Activated CD4-positive, alpha-beta memory T cell treated with anti-CD3 and anti-CD28 coated beads, Interleukin-2, amount 10 ng/mL, durations not matched to agents 7 days and 5 days (primary cell): ENCODE measurements at regions of chr11 and their contacts with region 1.

Region 1: GRCh38 chr11:44621140-44621681 is 55.7 kb downstream of the CD82 start:
- DNase-seq: peak; percentile 70
- H3K4me3 Mint-ChIP-seq: no peak overlapping the region
- H3K27ac Mint-ChIP-seq: no peak overlapping the region
- H3K4me1 Mint-ChIP-seq: peaks cover 18% of the 10 kb centered on the region
- H3K27me3 Mint-ChIP-seq: no peaks in the 10 kb centered on the region

Region 2: DNA sequence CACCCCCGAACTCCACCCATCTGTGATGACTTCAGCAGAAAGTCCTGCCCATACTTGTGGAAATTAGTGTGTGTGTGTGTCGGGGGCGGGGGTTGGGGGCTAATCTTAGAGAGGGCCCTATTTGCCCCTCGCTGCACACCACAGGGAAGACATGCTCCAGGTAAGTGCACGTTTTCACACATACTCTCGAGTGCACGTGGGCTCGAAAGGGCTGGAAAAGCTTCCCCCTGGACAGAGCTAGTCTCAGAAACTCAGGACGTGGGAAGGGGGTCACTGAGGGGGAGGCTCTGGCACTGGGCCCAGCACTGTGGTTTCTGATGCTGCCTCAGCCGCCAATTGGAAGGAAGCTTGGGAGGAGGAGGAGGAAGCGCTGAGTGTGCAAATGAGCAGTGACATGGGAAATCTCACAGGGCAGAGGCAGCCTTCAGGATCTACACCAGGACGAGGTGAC is 96.4 kb before region 1 on chr11:
- CTCF ChIA-PET with region 1: interaction called, 17 read pairs
- POLR2A ChIA-PET with region 1: no interaction called
- DNase-seq: no peak
- H3K4me3 Mint-ChIP-seq: no peak overlapping the region
- H3K27ac Mint-ChIP-seq: no peak overlapping the region
- H3K4me1 Mint-ChIP-seq: peaks cover 25% of the 10 kb centered on the region
- H3K27me3 Mint-ChIP-seq: peaks cover 21% of the 10 kb centered on the region

Region 3: GRCh38 chr11:44556735-44557409 is 64.3 kb before region 1 on chr11:
- CTCF ChIA-PET with region 1: interaction called, 425 read pairs
- POLR2A ChIA-PET with region 1: interaction called, 16 read pairs
- DNase-seq: peak; percentile 74
- H3K4me3 Mint-ChIP-seq: no peak overlapping the region
- H3K27ac Mint-ChIP-seq: peak overlapping the region; percentile 31
- H3K4me1 Mint-ChIP-seq: peaks cover 34% of the 10 kb centered on the region
- H3K27me3 Mint-ChIP-seq: peaks cover 4% of the 10 kb centered on the region

Region 4: GRCh38 chr11:44596525-44597276 is 24.5 kb before region 1 on chr11:
- CTCF ChIA-PET with region 1: interaction called, 18 read pairs
- POLR2A ChIA-PET with region 1: no interaction called
- DNase-seq: peak; percentile 84
- H3K4me3 Mint-ChIP-seq: peak overlapping the region; percentile 62
- H3K27ac Mint-ChIP-seq: peak overlapping the region; percentile 94
- H3K4me1 Mint-ChIP-seq: peaks cover 77% of the 10 kb centered on the region
- H3K27me3 Mint-ChIP-seq: no peaks in the 10 kb centered on the region

Region 5: GRCh38 chr11:44911029-44911814 is 290.0 kb after region 1 on chr11:
- CTCF ChIA-PET with region 1: interaction called, 17 read pairs
- POLR2A ChIA-PET with region 1: no interaction called
- DNase-seq: peak; percentile 84
- H3K4me3 Mint-ChIP-seq: no peak overlapping the region
- H3K27ac Mint-ChIP-seq: no peak overlapping the region
- H3K4me1 Mint-ChIP-seq: peaks cover 4% of the 10 kb centered on the region
- H3K27me3 Mint-ChIP-seq: no peaks in the 10 kb centered on the region